ENCODE measurements at regions of chr11 and their contacts with region 1.

Region 1: GRCh38 chr11:75388386-75389275 is 10.7 kb upstream of the RPS3 start:
- DNase-seq: peak; percentile 82
- H3K4me3 ChIP-seq: no peak overlapping the region
- H3K27ac ChIP-seq: no peak overlapping the region
- H3K4me1 ChIP-seq: peaks cover 6% of the 10 kb centered on the region
- H3K27me3 ChIP-seq: no peaks in the 10 kb centered on the region
- CTCF ChIP-seq: peak; percentile 73 to 87 (median 82)
- POLR2A ChIP-seq: no peak

Region 2: GRCh38 chr11:74941308-74941891 is 447.2 kb before region 1 on chr11:
- intact Hi-C with region 1: no loop called
- DNase-seq: no peak
- H3K4me3 ChIP-seq: no peak overlapping the region
- H3K27ac ChIP-seq: no peak overlapping the region
- H3K4me1 ChIP-seq: no peaks in the 10 kb centered on the region
- H3K27me3 ChIP-seq: no peaks in the 10 kb centered on the region
- CTCF ChIP-seq: no peak
- POLR2A ChIP-seq: no peak

Region 3: DNA sequence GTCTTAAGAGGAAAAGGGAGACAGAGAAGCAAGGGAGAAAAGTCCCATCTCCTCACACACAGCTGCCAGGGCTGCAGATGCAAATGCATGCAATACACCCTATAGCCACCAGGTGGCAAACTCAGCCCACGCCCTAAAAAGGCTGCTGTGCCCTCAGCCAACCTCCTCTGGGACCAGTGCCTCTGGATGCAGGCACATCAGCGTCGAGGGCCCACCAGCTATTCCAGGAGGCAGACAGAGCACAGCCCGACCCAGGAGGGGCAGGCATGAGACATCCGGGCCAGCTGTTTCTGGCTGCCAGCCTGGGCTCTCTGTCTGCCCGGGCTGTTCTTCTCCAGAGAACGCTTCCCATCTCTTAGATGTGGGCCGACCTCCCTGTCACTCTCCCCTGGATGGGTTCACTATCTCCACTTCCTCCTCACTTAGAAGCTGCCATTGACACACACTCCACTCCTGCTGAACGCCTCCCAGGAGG is 108.4 kb before region 1 on chr11:
- intact Hi-C with region 1: loop called (anchors 10 kb)
- DNase-seq: peak; percentile 89
- H3K4me3 ChIP-seq: no peak overlapping the region
- H3K27ac ChIP-seq: peak overlapping the region in 1 of 2 donors; percentile 29
- H3K4me1 ChIP-seq: no peaks in the 10 kb centered on the region
- H3K27me3 ChIP-seq: no peaks in the 10 kb centered on the region
- CTCF ChIP-seq: peak; percentile 98 to 99 (median 99)
- POLR2A ChIP-seq: no peak

Region 4: GRCh38 chr11:75337195-75337654 is 51.4 kb before region 1 on chr11:
- intact Hi-C with region 1: loop called (anchors 10 kb)
- DNase-seq: no peak
- H3K4me3 ChIP-seq: no peak overlapping the region
- H3K27ac ChIP-seq: peak overlapping the region in 1 of 2 donors; percentile 14
- H3K4me1 ChIP-seq: peaks cover 56% of the 10 kb centered on the region
- H3K27me3 ChIP-seq: no peaks in the 10 kb centered on the region
- CTCF ChIP-seq: no peak
- POLR2A ChIP-seq: no peak

Region 5: GRCh38 chr11:75468534-75469340 is 80.1 kb after region 1 on chr11:
- intact Hi-C with region 1: no loop called
- DNase-seq: peak; percentile 47
- H3K4me3 ChIP-seq: no peak overlapping the region
- H3K27ac ChIP-seq: no peak overlapping the region
- H3K4me1 ChIP-seq: peaks cover 10% of the 10 kb centered on the region
- H3K27me3 ChIP-seq: no peaks in the 10 kb centered on the region
- CTCF ChIP-seq: no peak
- POLR2A ChIP-seq: no peak